Activated naive CD4-positive, alpha-beta T cell treated with anti-CD3 and anti-CD28 coated beads for 36 hours (primary cell): ENCODE measurements at regions of chr2 and their contacts with region 1.

Region 1: DNA sequence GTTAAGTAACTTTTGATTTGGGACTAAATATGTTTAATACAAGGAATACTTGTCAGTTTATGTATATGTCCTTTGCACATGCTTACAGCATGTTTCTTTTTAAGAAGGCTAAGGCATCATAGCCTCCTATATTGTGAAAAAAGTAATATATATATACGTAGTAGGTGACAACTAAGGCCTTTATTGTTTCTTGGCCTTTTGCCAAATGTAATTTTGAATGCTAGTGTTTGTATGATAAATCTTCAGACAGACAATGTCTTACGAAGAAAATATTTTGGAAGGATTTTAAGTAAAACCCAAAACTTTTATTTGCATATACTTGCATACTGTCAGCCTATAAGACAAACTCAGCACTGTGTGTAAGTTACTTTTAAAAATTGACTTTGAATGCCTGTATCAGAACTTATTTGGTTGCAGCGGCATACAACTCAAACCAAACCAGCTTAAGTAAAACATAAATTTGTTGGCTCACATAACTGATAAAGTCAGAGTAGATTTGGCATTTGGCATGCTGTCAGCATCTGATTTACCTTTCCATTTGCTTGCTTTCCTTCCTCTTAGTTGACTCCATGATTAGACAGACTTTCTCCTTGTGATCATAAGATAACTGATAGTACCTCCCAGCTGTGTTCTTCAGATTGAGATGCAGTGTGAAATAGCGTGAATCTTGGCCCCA is 24.4 kb downstream of the UBE2E3 start:
- DNase-seq: no peak
- H3K4me3 Mint-ChIP-seq: no peak overlapping the region
- H3K27ac Mint-ChIP-seq: no peak overlapping the region
- H3K4me1 Mint-ChIP-seq: peaks cover 24% of the 10 kb centered on the region
- H3K27me3 Mint-ChIP-seq: no peaks in the 10 kb centered on the region

Region 2: GRCh38 chr2:180970016-180970415 is 34.8 kb before region 1 on chr2:
- CTCF ChIA-PET with region 1: no interaction called
- intact Hi-C with region 1: no loop called
- DNase-seq: no peak
- H3K4me3 Mint-ChIP-seq: no peak overlapping the region
- H3K27ac Mint-ChIP-seq: no peak overlapping the region
- H3K4me1 Mint-ChIP-seq: no peaks in the 10 kb centered on the region
- H3K27me3 Mint-ChIP-seq: no peaks in the 10 kb centered on the region

Region 3: GRCh38 chr2:180991820-180992219 is 13.0 kb before region 1 on chr2:
- CTCF ChIA-PET with region 1: interaction called, 3 read pairs
- intact Hi-C with region 1: loop called (anchors 1 kb)
- DNase-seq: no peak
- H3K4me3 Mint-ChIP-seq: no peak overlapping the region
- H3K27ac Mint-ChIP-seq: no peak overlapping the region
- H3K4me1 Mint-ChIP-seq: peaks cover 24% of the 10 kb centered on the region
- H3K27me3 Mint-ChIP-seq: no peaks in the 10 kb centered on the region

Region 4: DNA sequence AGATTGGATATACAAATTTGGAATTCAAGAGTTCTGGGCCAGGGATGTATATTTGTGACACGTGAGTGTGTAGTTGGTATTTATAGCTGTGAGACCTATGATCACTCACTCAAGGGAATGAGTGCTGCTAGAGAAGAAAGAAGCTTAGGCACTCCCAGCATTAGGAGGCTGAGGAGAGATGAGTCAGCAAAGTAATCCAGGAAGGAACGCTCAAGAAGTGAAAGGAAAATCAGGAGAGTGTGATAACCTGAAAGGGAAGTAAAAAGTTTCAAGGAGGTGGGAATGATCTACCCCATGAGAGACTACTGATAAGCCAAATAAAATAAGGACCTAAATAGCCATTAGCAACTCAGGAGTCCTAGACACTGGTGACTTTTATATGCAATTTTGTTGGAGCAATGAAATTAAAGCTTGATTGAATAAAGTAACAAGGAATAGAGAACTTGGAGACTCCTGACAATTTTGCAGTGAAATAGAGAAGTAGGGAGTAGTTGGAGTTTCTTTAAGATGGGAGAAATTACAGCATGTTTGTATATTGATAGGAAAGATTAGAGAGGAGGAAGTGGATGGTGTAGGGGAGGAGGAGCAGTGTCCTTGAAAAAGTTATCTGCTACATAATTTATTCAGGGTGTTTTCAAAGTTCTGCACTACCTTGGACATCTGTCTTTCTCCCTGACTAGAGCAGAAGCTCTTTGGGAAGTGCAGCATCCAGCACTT is 65.5 kb after region 1 on chr2:
- CTCF ChIA-PET with region 1: no interaction called
- intact Hi-C with region 1: no loop called
- DNase-seq: no peak
- H3K4me3 Mint-ChIP-seq: no peak overlapping the region
- H3K27ac Mint-ChIP-seq: no peak overlapping the region
- H3K4me1 Mint-ChIP-seq: peaks cover 6% of the 10 kb centered on the region
- H3K27me3 Mint-ChIP-seq: no peaks in the 10 kb centered on the region

Region 5: DNA sequence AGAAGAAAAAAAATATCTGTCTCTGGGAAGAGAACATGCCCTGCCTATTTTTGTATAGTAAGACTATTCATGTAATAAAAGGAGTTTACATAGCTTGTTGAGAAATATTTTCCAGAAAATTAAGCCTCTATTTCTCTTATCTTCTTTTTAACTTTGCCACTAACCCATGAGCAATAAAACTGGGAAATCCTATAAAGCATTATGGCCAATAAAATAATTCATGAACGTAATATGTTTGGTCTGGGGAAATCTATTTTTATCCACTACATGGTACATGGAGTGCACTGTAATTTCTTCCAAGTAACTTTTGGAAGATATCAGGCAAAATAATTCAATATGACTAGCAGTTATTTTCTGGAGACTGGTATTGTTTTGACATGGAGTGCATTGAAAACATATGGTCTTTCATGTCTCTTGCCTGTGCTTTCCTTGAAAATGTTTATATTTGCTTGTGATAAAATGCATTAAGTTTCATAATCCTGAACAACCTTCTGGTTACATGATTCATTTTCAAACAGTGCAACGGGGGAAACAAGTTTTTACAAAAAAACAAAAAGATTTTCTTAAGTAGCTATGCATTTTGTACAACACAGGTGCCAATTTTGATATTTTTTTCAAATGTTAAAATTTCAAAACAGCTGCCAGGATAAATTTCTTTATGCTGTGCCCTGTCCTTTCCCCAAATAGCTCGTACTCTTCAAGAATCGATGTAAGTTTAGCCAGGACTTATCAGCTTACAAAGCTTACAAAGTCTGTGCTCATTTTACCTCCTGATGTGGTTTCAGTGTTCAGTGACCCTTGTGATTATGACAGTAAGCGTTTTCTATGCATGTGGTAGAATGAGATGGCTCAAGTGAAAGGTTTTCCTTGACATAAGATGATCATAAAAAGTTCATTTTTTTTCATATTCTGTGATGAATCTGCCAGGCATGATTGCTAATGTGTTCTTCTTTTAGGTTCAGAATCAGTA is 170.1 kb after region 1 on chr2:
- CTCF ChIA-PET with region 1: no interaction called
- intact Hi-C with region 1: no loop called
- DNase-seq: no peak
- H3K4me3 Mint-ChIP-seq: no peak overlapping the region
- H3K27ac Mint-ChIP-seq: no peak overlapping the region
- H3K4me1 Mint-ChIP-seq: peaks cover 58% of the 10 kb centered on the region
- H3K27me3 Mint-ChIP-seq: no peaks in the 10 kb centered on the region